ENCODE measurements at regions of chr7 and their contacts with region 1.

Region 1: GRCh38 chr7:116588641-116589594 is 64.1 kb downstream of the CAV1 start:
- DNase-seq: peak; percentile 40
- ATAC-seq: peak; percentile 64
- H3K4me3 ChIP-seq: no peak overlapping the region
- H3K27ac ChIP-seq: no peak overlapping the region
- H3K4me1 ChIP-seq: peaks cover 29% of the 10 kb centered on the region
- H3K27me3 ChIP-seq: peaks cover 0 to 9% of the 10 kb centered on the region in 2 experiments; a peak in 2 of 5 replicates
- CTCF ChIP-seq: peak; percentile 68
- EP300 ChIP-seq: no peak
- POLR2A ChIP-seq: no peak
- RAD21 ChIP-seq: no peak

Region 2: GRCh38 chr7:116173051-116174028 is 415.6 kb before region 1 on chr7:
- CTCF ChIA-PET with region 1: no interaction called
- POLR2A ChIA-PET with region 1: no interaction called
- in situ Hi-C with region 1: no loop called
- intact Hi-C with region 1: loop called (anchors 2 kb)
- DNase-seq: peak; percentile 77
- ATAC-seq: peak; percentile 57
- H3K4me3 ChIP-seq: no peak overlapping the region
- H3K27ac ChIP-seq: no peak overlapping the region
- H3K4me1 ChIP-seq: peaks cover 48% of the 10 kb centered on the region
- H3K27me3 ChIP-seq: peaks cover 0 to 28% of the 10 kb centered on the region in 2 experiments; a peak in 4 of 5 replicates
- CTCF ChIP-seq: peak; percentile 67
- EP300 ChIP-seq: peak in 1 of 2 experiments; percentile 66; a peak in 2 of 4 replicates
- POLR2A ChIP-seq: no peak
- RAD21 ChIP-seq: no peak; the same call in 1 of the 2 replicates

Region 3: DNA sequence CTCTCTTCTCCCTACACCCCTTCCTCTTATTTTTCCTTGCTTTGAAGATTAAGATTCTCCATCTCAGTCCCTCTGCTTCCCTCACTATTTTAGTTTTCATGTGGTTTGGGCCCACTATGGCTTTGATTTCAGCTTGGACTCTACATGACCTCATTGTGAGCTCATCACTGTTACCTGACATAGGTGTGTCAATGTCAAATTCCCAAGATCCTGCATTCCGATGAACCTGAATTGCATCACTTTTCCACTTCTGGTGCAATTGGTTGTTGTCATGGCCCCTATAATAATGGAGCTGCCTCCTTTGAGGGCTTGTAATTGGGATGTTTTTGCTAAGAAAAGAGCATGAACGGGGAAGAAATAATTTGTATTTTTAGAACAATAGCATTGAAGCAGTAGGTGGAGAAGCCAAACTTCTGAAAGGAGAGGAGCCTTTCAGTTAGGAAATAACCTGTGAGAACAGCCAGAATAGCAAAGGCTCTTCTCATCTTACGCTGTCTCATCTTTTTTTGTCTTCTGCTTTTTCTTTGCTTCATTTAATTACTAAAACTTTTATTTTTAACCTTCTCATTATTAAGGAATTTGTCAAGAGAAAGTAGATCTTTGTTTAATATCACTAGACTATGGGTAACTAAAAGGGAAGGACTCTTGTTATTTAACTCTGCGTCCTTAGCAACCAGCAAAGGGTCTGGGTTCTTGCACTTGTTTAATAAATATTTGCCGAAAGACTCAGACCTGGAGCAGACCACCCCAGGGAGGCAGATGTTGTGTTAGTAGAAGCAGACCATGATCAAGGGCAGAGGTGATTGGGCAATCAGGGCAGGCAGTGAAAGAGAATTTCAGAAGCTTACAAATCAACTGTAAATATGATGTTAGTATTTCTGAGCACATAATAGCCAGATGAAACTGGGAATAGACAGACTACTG is 283.2 kb before region 1 on chr7:
- CTCF ChIA-PET with region 1: no interaction called
- POLR2A ChIA-PET with region 1: no interaction called
- in situ Hi-C with region 1: no loop called
- intact Hi-C with region 1: no loop called
- DNase-seq: peak; percentile 88
- ATAC-seq: peak; percentile 100
- H3K4me3 ChIP-seq: no peak overlapping the region
- H3K27ac ChIP-seq: peak overlapping the region; percentile 21
- H3K4me1 ChIP-seq: peaks cover 16% of the 10 kb centered on the region
- H3K27me3 ChIP-seq: no peaks in the 10 kb centered on the region
- CTCF ChIP-seq: no peak
- EP300 ChIP-seq: peak; percentile 64; a peak in 2 of 4 replicates
- POLR2A ChIP-seq: no peak
- RAD21 ChIP-seq: no peak

Region 4: DNA sequence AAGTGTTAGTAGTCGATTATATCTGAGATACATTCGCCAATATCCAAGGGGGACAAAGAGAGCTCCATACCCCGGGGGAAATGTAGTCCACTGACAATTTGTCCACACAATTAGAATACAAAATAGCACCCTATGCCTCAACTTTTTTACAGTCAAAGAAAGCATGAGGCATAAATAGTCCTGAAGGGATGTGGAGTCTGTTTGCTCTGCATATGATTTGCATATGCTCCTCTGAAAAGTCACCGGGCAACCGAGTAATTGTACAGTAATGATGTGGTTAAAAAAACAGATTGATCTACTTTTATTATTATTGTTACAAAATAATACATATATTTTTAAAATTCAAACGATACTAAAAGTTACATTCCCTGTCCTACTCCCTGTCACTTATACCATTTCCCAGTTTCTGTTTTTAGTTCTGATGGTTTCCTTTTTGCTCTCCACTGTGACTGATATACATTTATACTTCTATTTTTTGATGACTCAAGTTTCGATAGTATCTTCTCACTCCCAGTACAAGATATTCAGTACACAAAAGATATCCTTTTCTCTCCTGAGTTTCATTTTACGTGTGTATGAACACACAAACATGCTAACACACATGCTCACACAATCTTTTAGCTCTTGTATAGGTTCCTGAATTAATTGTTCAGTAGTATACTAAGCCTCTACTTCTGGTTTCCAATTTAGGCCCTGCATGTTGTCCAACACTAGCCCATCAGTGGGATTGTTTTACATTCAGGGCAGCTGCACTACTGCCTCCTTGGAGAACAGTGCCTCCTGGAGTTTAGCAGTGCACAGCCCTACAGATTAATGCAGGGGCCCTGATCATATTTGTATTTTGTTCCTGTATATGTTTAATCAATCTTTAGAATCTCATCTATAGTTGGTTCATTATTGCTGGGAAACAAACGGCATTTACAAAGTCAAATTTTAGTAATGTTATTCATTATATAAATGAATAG is 247.7 kb before region 1 on chr7:
- CTCF ChIA-PET with region 1: no interaction called
- POLR2A ChIA-PET with region 1: no interaction called
- in situ Hi-C with region 1: no loop called
- intact Hi-C with region 1: loop called (anchors 5 kb)
- DNase-seq: no peak
- ATAC-seq: peak; percentile 64; the same call in 2 of the 3 replicates
- H3K4me3 ChIP-seq: no peak overlapping the region
- H3K27ac ChIP-seq: no peak overlapping the region
- H3K4me1 ChIP-seq: peaks cover 11% of the 10 kb centered on the region; the same call in 1 of the 2 replicates
- H3K27me3 ChIP-seq: no peaks in the 10 kb centered on the region
- CTCF ChIP-seq: peak; percentile 26; the same call in 1 of the 2 replicates
- EP300 ChIP-seq: no peak
- POLR2A ChIP-seq: no peak
- RAD21 ChIP-seq: no peak

Region 5: GRCh38 chr7:116461500-116461899 is 127.4 kb before region 1 on chr7:
- CTCF ChIA-PET with region 1: no interaction called
- POLR2A ChIA-PET with region 1: no interaction called
- in situ Hi-C with region 1: no loop called
- intact Hi-C with region 1: no loop called
- DNase-seq: no peak
- ATAC-seq: no peak
- H3K4me3 ChIP-seq: no peak overlapping the region
- H3K27ac ChIP-seq: no peak overlapping the region
- H3K4me1 ChIP-seq: no peaks in the 10 kb centered on the region
- H3K27me3 ChIP-seq: no peaks in the 10 kb centered on the region
- CTCF ChIP-seq: no peak
- EP300 ChIP-seq: no peak
- POLR2A ChIP-seq: no peak
- RAD21 ChIP-seq: no peak

Region 6: DNA sequence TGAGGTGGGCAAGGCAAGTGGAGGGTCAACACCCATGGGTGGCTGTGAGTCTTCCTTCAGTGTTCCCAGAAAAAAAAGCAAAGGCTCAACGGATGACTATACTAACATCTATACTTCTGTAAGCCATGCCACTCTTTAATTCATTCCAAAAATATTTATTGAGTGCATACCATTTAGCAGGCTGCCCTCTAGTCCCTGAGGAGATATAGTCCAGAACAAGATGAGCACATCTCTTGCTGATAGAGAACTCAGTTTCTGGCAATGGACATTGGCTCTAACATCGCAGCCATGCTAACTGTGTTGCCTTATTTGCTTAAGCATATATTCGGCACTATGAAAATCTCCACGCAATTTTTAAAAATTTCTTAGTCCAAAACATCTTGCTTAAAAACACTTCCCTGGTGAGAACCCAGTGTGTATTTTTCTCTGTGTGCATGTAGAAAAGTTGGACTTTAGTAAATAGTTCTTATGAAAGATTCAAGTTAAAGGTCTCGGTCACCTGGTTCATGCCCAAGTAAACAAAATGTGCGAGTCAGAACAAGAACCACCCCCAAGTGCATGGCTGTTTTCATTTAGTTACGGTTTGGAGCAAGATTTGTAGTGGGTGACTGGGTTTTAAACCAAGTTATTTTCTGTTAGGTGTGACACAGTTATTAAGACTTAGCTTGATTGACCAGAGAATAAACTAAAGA is 152.9 kb after region 1 on chr7:
- CTCF ChIA-PET with region 1: no interaction called
- POLR2A ChIA-PET with region 1: no interaction called
- in situ Hi-C with region 1: no loop called
- intact Hi-C with region 1: loop called (anchors 5 kb)
- DNase-seq: peak; percentile 77
- ATAC-seq: peak; percentile 80
- H3K4me3 ChIP-seq: peak overlapping the region in 1 of 3 experiments; percentile 13; a peak in 1 of 6 replicates
- H3K27ac ChIP-seq: peak overlapping the region; percentile 40
- H3K4me1 ChIP-seq: peaks cover 73% of the 10 kb centered on the region
- H3K27me3 ChIP-seq: no peaks in the 10 kb centered on the region
- CTCF ChIP-seq: no peak
- EP300 ChIP-seq: peak in 1 of 2 experiments; percentile 74; a peak in 1 of 4 replicates
- POLR2A ChIP-seq: no peak
- RAD21 ChIP-seq: no peak